CD4-positive, alpha-beta memory T cell (primary cell): ENCODE measurements at regions of chr22 and their contacts with region 1.

Region 1: DNA sequence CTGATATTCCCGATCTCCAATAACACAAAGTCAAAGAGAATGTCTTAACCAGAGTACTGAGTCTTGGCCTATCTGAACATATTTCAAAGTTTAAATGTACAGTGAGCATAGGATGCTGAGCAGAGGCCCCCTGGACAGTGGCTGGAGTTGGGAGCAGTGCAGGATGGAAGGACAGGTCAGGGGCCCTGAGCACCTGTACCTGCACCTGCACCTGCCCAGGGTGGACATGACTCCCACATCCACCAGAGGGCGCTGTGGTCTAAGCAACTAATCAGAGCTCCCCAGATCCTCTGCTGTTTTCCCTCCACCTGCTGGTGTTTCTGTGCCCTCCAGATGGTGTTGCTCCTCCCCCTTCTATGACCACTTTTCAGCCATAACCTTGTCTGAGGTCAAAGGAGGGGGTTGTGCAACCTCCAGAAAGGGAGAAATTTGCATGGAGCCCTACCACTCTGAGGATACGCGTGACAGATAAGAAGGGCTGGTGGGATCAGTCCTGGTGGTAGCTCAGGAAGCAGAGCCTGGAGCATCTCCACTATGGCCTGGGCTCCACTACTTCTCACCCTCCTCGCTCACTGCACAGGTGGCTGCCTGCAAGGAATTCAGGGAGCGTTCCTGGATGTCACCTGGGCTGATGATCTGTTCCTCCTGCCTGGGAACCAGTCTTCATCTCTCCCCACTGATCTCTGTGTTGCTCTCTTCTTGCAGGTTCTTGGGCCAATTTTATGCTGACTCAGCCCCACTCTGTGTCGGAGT is 49.1 kb upstream of the VPREB1 start:
- DNase-seq: peak; percentile 65 to 73 (median 71)
- H3K4me3 ChIP-seq: no peak overlapping the region
- H3K4me3 Mint-ChIP-seq: no peak overlapping the region
- H3K27ac ChIP-seq: no peak overlapping the region
- H3K27ac Mint-ChIP-seq: no peak overlapping the region
- H3K4me1 ChIP-seq: no peaks in the 10 kb centered on the region
- H3K4me1 Mint-ChIP-seq: peaks cover 0 to 1% (median 0%) of the 10 kb centered on the region in 4 donors
- H3K27me3 ChIP-seq: no peaks in the 10 kb centered on the region
- H3K27me3 Mint-ChIP-seq: peaks cover 9 to 16% of the 10 kb centered on the region in 2 donors

Region 2: DNA sequence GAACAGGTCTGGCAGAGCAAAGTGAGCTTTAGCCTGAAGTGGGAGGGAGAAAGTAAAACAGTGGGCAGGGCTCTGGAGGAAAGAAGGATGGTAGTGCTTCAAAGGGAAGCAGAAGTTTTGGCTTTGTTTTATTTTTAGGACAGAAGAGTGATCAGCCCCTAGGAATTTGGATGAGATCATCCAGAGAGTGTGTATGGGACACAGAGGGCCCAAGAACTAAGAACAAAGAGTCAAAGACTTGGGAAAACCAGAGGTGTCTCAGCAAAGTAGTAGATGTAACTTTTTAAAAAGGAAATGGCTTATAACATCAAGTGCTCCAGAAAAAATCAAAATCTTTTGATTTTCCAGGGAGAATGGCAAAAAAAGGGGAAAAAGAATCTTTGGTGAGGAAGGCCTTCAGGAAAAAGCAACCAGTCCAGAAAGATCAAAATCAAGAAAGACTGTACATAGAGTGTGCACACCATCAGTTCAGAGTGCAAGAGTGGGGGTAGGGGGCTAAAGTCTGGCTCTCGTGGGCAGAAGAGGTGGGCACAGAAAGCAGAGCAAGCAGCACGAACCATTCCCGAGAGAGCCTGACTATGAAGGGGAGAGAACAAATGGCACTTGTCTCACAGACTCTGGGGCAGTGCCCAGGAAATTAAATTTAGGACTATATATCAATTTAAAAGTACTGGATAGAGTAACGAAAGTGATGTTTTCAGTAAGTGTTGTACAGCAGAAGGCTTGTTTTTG is 358.0 kb before region 1 on chr22:
- CTCF ChIA-PET with region 1: no interaction called
- POLR2A ChIA-PET with region 1: no interaction called
- intact Hi-C with region 1: no loop called
- DNase-seq: no peak
- H3K4me3 ChIP-seq: no peak overlapping the region
- H3K4me3 Mint-ChIP-seq: peak overlapping the region in 1 of 8 donors; percentile 21
- H3K27ac ChIP-seq: no peak overlapping the region
- H3K27ac Mint-ChIP-seq: peak overlapping the region in 6 of 7 donors; percentile 7 to 83 (median 51)
- H3K4me1 ChIP-seq: peaks cover 31% of the 10 kb centered on the region
- H3K4me1 Mint-ChIP-seq: peaks cover 43 to 72% (median 56%) of the 10 kb centered on the region in 4 donors
- H3K27me3 ChIP-seq: no peaks in the 10 kb centered on the region
- H3K27me3 Mint-ChIP-seq: no peaks in the 10 kb centered on the region

Region 3: DNA sequence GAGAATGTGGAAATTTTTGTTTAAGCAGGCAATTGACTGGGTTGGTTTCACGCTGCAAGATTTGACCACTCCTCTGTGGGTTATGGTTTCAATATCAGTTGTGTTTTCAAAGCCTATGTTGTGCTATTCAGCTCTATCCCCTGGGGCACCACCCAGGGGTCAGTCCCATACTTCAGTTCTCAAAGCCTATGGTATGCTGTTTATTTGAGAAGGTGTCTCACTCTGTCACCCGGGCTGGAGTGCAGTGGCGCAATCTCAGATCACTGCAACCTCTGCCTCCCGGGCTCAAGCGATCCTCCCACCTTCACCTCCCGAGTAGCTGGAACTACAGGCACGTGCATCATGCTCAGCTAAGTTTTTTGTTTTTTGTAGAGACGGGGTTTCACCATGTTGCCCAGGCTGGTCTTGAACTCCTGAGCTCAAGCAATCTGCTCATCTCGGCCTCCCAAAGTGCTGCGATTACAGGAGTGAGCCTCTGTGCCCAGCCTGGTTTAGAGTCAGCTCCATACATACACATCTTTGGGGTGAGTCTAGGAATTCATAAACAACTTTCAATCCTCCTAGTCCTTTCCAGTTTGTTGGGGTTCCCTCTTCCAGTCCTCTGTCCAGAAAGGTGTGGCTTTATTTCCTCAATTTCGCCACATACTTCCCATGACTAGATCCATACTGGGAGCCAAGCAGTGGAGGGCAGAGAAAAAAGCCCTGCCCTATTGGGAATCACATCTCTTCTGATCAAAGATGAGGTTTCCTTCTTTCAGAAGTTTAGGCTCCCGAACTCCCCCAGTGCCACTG is 292.9 kb before region 1 on chr22:
- CTCF ChIA-PET with region 1: no interaction called
- POLR2A ChIA-PET with region 1: no interaction called
- intact Hi-C with region 1: no loop called
- DNase-seq: no peak
- H3K4me3 ChIP-seq: no peak overlapping the region
- H3K4me3 Mint-ChIP-seq: no peak overlapping the region
- H3K27ac ChIP-seq: no peak overlapping the region
- H3K27ac Mint-ChIP-seq: no peak overlapping the region
- H3K4me1 ChIP-seq: no peaks in the 10 kb centered on the region
- H3K4me1 Mint-ChIP-seq: peaks cover 0 to 2% (median 0%) of the 10 kb centered on the region in 4 donors
- H3K27me3 ChIP-seq: no peaks in the 10 kb centered on the region
- H3K27me3 Mint-ChIP-seq: peaks cover 0 to 2% of the 10 kb centered on the region in 2 donors

Region 4: GRCh38 chr22:22156716-22157347 is 38.6 kb before region 1 on chr22:
- CTCF ChIA-PET with region 1: interaction called, 4 read pairs
- POLR2A ChIA-PET with region 1: no interaction called
- intact Hi-C with region 1: loop called (anchors 2 kb)
- DNase-seq: peak; percentile 52 to 76 (median 57)
- H3K4me3 ChIP-seq: no peak overlapping the region
- H3K4me3 Mint-ChIP-seq: peak overlapping the region in 2 of 8 donors; percentile 13 to 18
- H3K27ac ChIP-seq: no peak overlapping the region
- H3K27ac Mint-ChIP-seq: peak overlapping the region in 1 of 7 donors; percentile 12
- H3K4me1 ChIP-seq: peaks cover 4% of the 10 kb centered on the region
- H3K4me1 Mint-ChIP-seq: peaks cover 0 to 6% (median under 1%) of the 10 kb centered on the region in 4 donors
- H3K27me3 ChIP-seq: no peaks in the 10 kb centered on the region
- H3K27me3 Mint-ChIP-seq: peaks cover 5 to 11% of the 10 kb centered on the region in 2 donors

Region 5: DNA sequence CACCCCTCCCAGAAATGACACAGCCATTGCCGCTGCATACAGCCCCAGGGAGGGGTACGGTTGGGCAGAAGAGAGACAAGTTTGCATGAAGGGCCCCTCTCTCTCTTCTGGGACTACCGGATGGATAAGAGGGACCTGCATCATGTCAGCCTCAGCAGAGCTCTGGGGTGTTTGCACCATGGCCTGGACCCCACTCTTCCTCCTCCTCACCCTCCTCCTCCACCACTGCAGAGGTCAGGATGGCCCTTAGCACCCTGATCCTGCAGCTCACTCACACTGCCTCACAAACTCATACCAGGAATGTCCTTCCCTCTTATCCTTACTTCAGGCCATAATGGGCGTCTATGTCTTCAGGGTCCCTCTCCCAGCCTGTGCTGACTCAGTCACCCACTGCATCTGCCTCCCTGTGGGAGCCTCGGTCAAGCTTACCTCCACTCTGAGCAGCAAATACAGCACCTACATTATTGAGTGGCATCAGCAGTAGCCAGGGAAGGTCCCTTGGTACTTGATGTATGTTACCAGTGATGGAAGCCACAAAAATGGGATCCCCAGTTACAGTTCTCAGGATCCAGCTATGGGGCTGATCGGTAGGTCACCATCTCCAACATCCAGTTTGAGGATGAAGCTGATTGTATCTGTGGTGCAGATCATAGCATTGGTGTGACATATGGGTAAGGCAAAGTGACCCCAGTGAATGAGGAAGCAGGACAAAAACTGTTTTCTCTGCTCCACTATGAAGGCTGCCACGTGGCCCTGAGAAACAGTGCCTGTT is 13.0 kb before region 1 on chr22:
- CTCF ChIA-PET with region 1: interaction called, 10 read pairs
- POLR2A ChIA-PET with region 1: no interaction called
- intact Hi-C with region 1: no loop called
- DNase-seq: no peak
- H3K4me3 ChIP-seq: no peak overlapping the region
- H3K4me3 Mint-ChIP-seq: no peak overlapping the region
- H3K27ac ChIP-seq: no peak overlapping the region
- H3K27ac Mint-ChIP-seq: no peak overlapping the region
- H3K4me1 ChIP-seq: no peaks in the 10 kb centered on the region
- H3K4me1 Mint-ChIP-seq: no peaks in the 10 kb centered on the region
- H3K27me3 ChIP-seq: no peaks in the 10 kb centered on the region
- H3K27me3 Mint-ChIP-seq: peaks cover 22 to 28% of the 10 kb centered on the region in 2 donors

Region 6: GRCh38 chr22:22235558-22235957 is 40.1 kb after region 1 on chr22:
- CTCF ChIA-PET with region 1: interaction called, 10 read pairs
- POLR2A ChIA-PET with region 1: no interaction called
- intact Hi-C with region 1: no loop called
- DNase-seq: peak in 4 of 5 donors; percentile 18 to 39 (median 21)
- H3K4me3 ChIP-seq: no peak overlapping the region
- H3K4me3 Mint-ChIP-seq: no peak overlapping the region
- H3K27ac ChIP-seq: no peak overlapping the region
- H3K27ac Mint-ChIP-seq: peak overlapping the region in 1 of 7 donors; percentile 46
- H3K4me1 ChIP-seq: no peaks in the 10 kb centered on the region
- H3K4me1 Mint-ChIP-seq: no peaks in the 10 kb centered on the region
- H3K27me3 ChIP-seq: no peaks in the 10 kb centered on the region
- H3K27me3 Mint-ChIP-seq: peaks cover 0 to 3% of the 10 kb centered on the region in 2 donors